ENCODE measurements at regions of chr12 and their contacts with region 1.

Region 1: DNA sequence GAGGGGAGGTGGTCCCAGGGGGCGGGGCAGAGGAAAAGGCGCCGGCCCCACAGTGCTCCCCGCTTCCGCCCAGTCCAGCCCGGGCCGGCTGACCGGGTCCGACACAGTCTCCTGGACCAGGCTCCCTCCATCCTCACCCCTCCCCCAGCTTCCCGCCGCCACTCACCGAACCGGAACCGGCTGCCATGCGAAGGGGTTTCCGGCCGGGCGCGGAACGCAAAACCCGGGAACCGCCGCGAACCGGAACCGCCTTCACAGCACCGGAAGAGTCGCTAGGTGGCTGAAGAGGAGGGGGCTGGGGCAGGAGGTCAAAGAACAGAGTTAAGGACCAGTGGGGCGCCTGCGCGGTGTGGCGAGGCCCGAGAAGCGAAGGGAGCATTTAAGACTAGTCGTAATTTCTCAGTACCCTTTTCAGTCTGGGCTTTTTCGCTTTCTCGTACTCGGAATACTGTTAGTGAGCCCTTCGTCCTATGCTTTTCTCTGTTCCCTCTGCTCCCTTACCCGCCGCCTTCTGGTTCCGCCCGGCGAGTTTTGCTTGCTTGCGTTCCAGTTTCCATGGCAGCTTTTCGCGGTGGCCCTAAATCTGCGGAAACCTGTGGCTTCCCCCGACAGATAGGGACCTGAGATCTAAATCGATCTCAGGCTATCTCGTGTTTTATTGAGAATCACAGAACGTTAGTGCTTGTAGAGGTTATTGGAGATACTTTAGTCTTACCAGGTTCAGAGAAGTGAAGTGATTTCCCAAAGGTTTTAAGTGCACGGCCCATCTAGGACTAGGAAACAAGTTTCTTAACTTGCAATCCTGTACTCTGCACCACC is at the start of gene SENP1:
- DNase-seq: peak; percentile 89
- H3K4me3 ChIP-seq: peak within 1 kb of the TSS; percentile 82
- H3K27ac ChIP-seq: peak within 1 kb of the TSS; percentile 87
- H3K4me1 ChIP-seq: peaks cover 13% of the 10 kb centered on the region
- H3K27me3 ChIP-seq: no peaks in the 10 kb centered on the region
- CTCF ChIP-seq: no peak
- total RNA-seq, gene SENP1: 14.9 to 16.8 TPM

Region 2: DNA sequence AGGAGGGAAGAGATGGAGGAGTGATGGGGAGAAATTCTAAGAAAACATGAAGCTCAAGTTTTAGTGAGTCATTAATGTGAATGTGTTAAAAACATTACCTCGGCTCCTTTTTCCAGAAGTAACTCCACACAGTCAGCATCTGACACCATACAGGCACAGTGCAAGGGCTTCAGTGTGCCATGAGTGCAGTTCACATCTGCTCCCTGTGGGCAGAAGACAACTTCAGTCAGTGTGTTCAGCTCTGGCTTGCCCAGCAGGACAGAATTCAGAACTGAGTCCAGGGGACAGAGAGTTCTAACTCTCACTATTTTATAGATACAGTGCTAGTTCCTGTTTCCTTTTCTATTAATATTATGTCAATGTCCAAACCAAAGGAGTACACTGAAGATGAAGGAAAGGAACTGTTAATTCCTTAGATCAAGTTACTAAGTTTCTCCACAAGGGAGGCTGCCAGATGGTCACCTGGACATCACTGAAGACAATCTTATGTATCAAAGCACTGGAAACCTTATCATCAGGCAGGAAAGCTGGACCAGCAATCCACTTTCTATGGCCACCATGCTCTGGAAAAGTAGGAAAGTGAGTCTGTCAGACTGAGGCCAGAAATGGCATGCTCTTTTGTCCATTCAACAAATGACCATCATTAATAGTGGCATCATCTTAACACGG is 45.2 kb after region 1 on chr12:
- intact Hi-C with region 1: loop called (anchors 5 kb)
- DNase-seq: no peak
- H3K4me3 ChIP-seq: no peak overlapping the region
- H3K27ac ChIP-seq: no peak overlapping the region
- H3K4me1 ChIP-seq: peaks cover 3% of the 10 kb centered on the region
- H3K27me3 ChIP-seq: no peaks in the 10 kb centered on the region
- CTCF ChIP-seq: no peak

Measured in colonic mucosa (tissue), 4 donors.